MCF 10A (cell line): ENCODE measurements at regions of chr3 and their contacts with region 1.

Region 1: DNA sequence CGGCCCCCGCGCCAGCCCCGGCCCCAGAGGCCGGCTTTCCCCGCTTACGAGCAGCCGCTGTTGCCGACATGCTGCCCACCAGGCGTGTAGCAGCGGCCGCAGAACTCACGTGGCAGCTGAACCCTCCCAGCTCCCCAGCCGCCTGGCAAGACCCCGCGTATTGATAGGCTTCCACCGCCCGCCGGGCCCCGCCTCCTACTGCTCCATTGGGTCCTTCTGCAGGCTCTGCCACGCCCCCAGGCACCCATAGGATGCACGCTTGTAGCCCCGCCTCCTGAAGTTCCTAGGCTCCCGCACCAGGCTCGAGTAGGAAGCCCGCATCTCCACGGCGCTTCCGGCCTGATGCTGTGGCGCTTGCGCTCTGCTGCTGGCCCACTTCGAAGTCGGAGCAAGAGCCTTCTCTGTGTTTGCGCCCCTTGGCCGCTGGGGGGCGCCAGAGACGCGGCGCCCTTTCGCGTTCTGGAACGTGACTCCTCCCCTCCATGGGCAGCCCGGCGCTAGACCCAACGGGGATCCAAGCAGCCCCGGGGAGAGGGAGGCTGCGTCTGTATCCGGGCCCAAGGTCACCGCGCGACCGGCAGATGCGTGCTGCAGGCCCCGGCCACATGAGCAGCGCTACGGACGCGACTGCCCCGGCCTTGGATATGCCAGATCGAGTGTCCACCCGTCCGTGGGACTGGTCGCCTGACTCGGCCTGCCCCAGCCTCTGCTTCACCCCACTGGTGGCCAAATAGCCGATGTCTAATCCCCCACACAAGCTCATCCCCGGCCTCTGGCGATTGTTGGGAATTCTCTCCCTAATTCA is at the starts of genes PARP3 and RRP9:
- DNase-seq: peak; percentile 100
- H3K4me3 Mint-ChIP-seq: peak within 1 kb of the TSS; percentile 92
- H3K27ac Mint-ChIP-seq: peak within 1 kb of the TSS; percentile 95
- H3K4me1 Mint-ChIP-seq: peaks cover 16% of the 10 kb centered on the region
- H3K27me3 Mint-ChIP-seq: no peaks in the 10 kb centered on the region
- CTCF ChIP-seq: peak; percentile 96
- total RNA-seq, gene PARP3: 19.4 and 25.5 TPM in 2 replicates
- total RNA-seq, gene RRP9: 60.8 and 80.2 TPM in 2 replicates

Region 2: GRCh38 chr3:51819709-51820406 is 122.1 kb before region 1 on chr3:
- CTCF ChIA-PET with region 1: no interaction called
- POLR2A ChIA-PET with region 1: no interaction called
- intact Hi-C with region 1: no loop called
- DNase-seq: peak; percentile 9
- H3K4me3 Mint-ChIP-seq: no peak overlapping the region
- H3K27ac Mint-ChIP-seq: no peak overlapping the region
- H3K4me1 Mint-ChIP-seq: no peaks in the 10 kb centered on the region
- H3K27me3 Mint-ChIP-seq: peaks cover 46% of the 10 kb centered on the region
- CTCF ChIP-seq: peak; percentile 6

Region 3: GRCh38 chr3:51904034-51904823 is 37.8 kb before region 1 on chr3:
- CTCF ChIA-PET with region 1: no interaction called
- POLR2A ChIA-PET with region 1: no interaction called
- intact Hi-C with region 1: no loop called
- DNase-seq: no peak
- H3K4me3 Mint-ChIP-seq: no peak overlapping the region
- H3K27ac Mint-ChIP-seq: no peak overlapping the region
- H3K4me1 Mint-ChIP-seq: peaks cover 7% of the 10 kb centered on the region
- H3K27me3 Mint-ChIP-seq: no peaks in the 10 kb centered on the region
- CTCF ChIP-seq: no peak

Region 4: DNA sequence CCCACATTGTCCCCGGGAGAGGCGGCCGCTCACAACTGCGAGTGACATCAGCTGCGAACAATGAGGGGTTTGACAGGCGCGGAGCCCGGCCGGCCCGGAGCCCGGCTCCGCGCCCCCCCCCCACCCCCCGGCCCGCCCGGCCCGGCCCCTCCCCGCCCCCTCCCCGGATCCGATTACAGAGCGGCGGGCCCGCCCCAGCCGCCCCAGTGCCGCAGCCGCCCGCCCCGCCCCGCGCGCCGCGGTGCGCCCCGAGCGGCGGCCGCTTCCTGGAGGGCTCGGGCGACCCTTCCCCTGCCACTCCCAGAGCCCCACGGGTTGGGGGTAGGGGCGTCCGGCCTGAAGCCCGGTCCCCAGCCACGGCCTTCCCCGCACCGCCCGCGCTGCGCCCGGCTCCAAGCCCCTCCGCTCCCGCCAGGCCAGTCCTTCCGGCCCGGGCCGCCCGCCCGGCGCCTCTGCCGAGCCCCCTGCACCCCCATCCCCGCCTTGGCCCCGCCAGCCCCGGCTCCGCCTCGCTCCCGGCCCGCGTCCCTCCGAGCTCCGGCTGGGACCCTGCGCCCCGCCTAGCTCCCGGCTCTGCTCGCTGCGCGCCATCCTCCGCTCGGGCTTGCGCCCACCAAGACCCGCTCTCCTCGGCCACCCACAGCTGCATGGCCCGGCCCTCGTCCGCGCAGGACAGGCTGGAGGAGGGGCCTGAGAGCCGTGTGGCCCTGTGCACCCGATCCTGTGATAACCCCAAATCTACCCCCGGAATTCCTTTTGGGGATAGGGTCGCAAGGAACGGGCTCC is 25.6 kb after region 1 on chr3 and contains the start of gene PCBP4:
- CTCF ChIA-PET with region 1: interaction called, 49 read pairs
- POLR2A ChIA-PET with region 1: interaction called, 127 read pairs
- intact Hi-C with region 1: no loop called
- DNase-seq: no peak
- H3K4me3 Mint-ChIP-seq: peak within 1 kb of the TSS; percentile 78
- H3K27ac Mint-ChIP-seq: peak within 1 kb of the TSS; percentile 49
- H3K4me1 Mint-ChIP-seq: peaks cover 10% of the 10 kb centered on the region
- H3K27me3 Mint-ChIP-seq: no peaks in the 10 kb centered on the region
- CTCF ChIP-seq: no peak
- total RNA-seq, gene PCBP4: 26.4 TPM in 2 replicates

Region 5: DNA sequence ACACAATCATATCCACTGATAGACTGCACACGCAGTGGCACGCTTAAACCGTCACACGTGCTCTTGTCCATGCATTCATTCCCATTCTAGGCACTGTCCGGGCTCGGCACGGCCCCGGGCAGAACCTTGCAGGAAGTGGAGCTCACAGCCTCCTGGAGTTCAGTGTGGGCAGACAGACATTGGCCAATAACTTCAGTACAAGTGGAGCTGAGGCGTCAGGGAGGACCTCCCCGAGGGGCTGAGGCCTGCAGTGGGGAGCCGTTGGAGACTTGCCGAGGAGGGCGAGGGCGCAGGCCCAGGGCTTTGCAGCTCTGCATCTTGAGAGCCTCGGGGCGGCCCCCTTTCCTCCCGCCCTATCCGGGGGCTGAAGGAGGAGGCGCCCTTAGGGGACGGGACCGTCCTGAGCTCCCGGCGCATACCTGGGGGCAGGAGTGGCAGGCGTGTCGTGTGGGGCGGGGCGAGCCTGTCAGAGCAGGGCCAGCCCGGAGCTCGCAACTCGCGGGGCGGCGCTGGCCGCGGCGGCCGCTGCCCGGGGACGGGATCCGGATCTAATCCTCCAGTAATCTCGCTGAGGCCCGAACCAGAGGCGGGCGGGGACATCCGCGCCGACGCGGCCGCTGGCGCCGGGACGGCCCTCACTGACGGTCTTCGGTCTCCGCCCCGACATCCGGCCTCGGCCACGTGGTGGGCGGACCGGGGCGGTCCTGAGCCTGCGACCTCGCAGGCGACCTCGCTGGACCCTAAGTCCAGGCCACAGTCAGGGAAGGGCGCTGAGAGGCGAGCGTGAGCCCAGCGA is 41.0 kb after region 1 on chr3 and contains the start of gene ACY1:
- CTCF ChIA-PET with region 1: interaction called, 19 read pairs
- POLR2A ChIA-PET with region 1: interaction called, 48 read pairs
- intact Hi-C with region 1: no loop called
- DNase-seq: peak; percentile 87
- H3K4me3 Mint-ChIP-seq: peak within 1 kb of the TSS; percentile 87
- H3K27ac Mint-ChIP-seq: peak within 1 kb of the TSS; percentile 98
- H3K4me1 Mint-ChIP-seq: peaks cover 25% of the 10 kb centered on the region
- H3K27me3 Mint-ChIP-seq: no peaks in the 10 kb centered on the region
- CTCF ChIP-seq: no peak
- total RNA-seq, gene ACY1: 109 and 164 TPM in 2 replicates

Region 6: GRCh38 chr3:52014613-52015012 is 72.6 kb after region 1 on chr3:
- CTCF ChIA-PET with region 1: no interaction called
- POLR2A ChIA-PET with region 1: no interaction called
- intact Hi-C with region 1: no loop called
- DNase-seq: no peak
- H3K4me3 Mint-ChIP-seq: no peak overlapping the region
- H3K27ac Mint-ChIP-seq: no peak overlapping the region
- H3K4me1 Mint-ChIP-seq: no peaks in the 10 kb centered on the region
- H3K27me3 Mint-ChIP-seq: no peaks in the 10 kb centered on the region
- CTCF ChIP-seq: no peak

Region 7: GRCh38 chr3:52046186-52046913 is 104.3 kb after region 1 on chr3:
- CTCF ChIA-PET with region 1: interaction called, 4 read pairs
- POLR2A ChIA-PET with region 1: interaction called, 30 read pairs
- intact Hi-C with region 1: no loop called
- DNase-seq: peak; percentile 99
- H3K4me3 Mint-ChIP-seq: peak overlapping the region; percentile 68
- H3K27ac Mint-ChIP-seq: peak overlapping the region; percentile 95
- H3K4me1 Mint-ChIP-seq: peaks cover 56% of the 10 kb centered on the region
- H3K27me3 Mint-ChIP-seq: no peaks in the 10 kb centered on the region
- CTCF ChIP-seq: no peak

Region 8: DNA sequence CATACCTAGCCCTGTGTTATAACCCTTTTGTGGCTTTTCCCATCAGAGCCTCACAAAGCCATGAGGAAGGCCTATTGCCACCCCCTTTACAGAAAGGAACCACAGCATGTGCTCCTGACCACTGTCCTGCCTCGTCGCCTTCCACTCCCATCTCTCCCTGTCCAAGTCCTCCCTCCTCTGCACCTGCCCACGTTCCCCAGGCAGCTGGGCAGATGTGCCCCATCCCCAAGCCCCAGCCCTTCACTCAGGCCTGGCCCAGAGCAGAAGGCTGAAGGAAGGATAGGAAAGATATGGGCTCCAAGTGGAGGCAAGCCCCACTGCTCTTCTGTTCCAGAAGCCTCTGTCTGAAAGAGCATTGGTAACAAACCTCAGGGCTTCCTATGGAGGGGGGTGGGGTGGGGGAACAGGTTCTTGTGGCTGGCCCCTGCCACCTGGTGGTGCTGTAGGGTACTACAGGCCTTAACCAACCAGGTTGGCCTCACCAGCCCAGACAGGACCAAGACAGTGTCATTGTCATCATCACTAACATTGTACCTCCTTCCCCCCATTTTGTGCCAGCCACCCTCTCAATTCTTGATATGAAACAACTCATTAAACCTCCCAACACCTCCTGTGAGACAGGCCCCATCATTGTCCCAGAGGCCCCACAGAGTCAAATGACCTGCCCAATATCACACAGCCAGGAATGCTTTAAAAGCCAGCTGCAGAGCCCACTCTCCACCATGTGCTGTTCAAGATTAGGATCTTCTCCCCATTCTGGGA is 202.2 kb after region 1 on chr3:
- CTCF ChIA-PET with region 1: interaction called, 4 read pairs
- POLR2A ChIA-PET with region 1: interaction called, 3 read pairs
- intact Hi-C with region 1: loop called (anchors 1 kb)
- DNase-seq: peak; percentile 79
- H3K4me3 Mint-ChIP-seq: no peak overlapping the region
- H3K27ac Mint-ChIP-seq: peak overlapping the region; percentile 31
- H3K4me1 Mint-ChIP-seq: no peaks in the 10 kb centered on the region
- H3K27me3 Mint-ChIP-seq: no peaks in the 10 kb centered on the region
- CTCF ChIP-seq: peak; percentile 89